ENCODE measurements at regions of chr1 and their contacts with region 1.

Region 1: GRCh38 chr1:203486618-203487370 is 7.2 kb upstream of the OPTC start:
- DNase-seq: no peak
- H3K4me3 ChIP-seq: peak overlapping the region; percentile 25 to 60 (median 38); a peak in 6 of 8 replicates
- H3K27ac ChIP-seq: peak overlapping the region; percentile 34; the same call in 1 of the 2 replicates
- H3K4me1 ChIP-seq: peaks cover 0 to 11% (median 5%) of the 10 kb centered on the region in 4 experiments; a peak in 6 of 7 replicates
- H3K27me3 ChIP-seq: no peaks in the 10 kb centered on the region
- CTCF ChIP-seq: no peak
- EP300 ChIP-seq: no peak
- POLR2A ChIP-seq: no peak
- RAD21 ChIP-seq: no peak

Region 2: DNA sequence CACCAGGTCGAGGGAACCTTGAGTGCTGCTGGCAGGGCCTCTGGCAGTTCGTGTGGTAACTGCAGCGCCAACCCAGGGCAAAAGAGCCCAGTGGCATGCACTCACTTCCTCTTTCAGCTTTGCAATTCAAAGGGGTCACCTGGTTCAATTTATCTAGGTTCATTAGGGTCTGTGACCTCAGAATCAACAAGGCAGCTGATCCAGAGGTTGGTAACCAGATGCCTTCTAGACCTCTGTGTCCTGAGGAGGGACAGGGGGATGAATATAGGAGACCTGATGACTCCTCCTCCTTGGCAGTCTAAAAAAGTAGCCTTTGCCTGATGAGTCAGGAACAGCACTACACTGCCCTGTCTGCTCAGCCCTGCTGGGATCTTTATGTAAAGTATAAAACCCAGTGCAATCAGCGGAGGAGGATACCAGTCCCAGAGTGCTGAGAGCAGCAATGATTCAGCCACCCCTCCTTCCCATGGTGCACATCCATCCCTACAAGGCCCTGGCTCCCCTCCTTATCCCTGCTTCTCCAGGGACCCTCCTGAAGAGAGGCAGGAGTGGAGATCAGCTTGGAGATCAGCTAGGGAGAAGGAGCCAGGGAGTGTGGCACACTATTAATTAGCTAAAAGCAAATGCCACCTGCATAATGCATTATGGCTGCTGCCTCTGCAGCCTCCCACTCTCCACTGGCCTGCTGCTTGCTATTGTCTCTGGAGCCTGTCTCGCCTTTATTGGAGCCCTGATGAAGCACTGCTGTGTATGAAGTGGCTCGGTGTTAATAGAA is 124.7 kb before region 1 on chr1:
- CTCF ChIA-PET with region 1: interaction called, 330 read pairs
- POLR2A ChIA-PET with region 1: no interaction called
- DNase-seq: no peak
- H3K4me3 ChIP-seq: no peak overlapping the region
- H3K27ac ChIP-seq: no peak overlapping the region
- H3K4me1 ChIP-seq: peaks cover 0 to 2% (median 0%) of the 10 kb centered on the region in 4 experiments; a peak in 2 of 7 replicates
- H3K27me3 ChIP-seq: peaks cover 0 to 2% (median 0%) of the 10 kb centered on the region in 4 experiments; a peak in 3 of 7 replicates
- CTCF ChIP-seq: no peak
- EP300 ChIP-seq: no peak
- POLR2A ChIP-seq: no peak
- RAD21 ChIP-seq: no peak

Region 3: DNA sequence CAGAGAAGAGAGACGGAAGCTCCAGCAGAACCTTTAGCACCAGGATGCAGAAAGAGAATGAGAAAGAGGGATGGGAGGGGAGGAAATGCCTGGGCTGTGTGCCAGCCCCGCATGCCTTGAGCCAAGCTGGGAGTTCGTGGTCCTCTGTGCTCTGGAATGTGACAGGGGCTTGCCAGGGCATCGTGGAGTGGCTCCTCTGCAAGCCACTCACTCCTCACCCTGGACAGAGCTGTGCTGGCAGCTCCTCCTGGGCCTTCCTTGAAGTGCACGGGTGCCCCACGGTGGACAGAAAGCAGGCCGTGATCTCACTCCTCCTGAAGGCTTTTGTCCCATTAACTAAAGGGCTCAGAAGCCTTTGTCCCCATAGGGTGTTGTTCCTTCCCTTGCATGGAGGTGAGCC is 46.0 kb before region 1 on chr1:
- CTCF ChIA-PET with region 1: interaction called, 10 read pairs
- POLR2A ChIA-PET with region 1: interaction called, 3 read pairs
- DNase-seq: no peak
- H3K4me3 ChIP-seq: no peak overlapping the region
- H3K27ac ChIP-seq: no peak overlapping the region
- H3K4me1 ChIP-seq: peaks cover 2 to 9% (median 5%) of the 10 kb centered on the region in 4 experiments
- H3K27me3 ChIP-seq: no peaks in the 10 kb centered on the region; a peak in 1 of 7 replicates
- CTCF ChIP-seq: peak; percentile 22 to 56 (median 53)
- EP300 ChIP-seq: no peak
- POLR2A ChIP-seq: no peak
- RAD21 ChIP-seq: peak; percentile 60 to 68

Region 4: DNA sequence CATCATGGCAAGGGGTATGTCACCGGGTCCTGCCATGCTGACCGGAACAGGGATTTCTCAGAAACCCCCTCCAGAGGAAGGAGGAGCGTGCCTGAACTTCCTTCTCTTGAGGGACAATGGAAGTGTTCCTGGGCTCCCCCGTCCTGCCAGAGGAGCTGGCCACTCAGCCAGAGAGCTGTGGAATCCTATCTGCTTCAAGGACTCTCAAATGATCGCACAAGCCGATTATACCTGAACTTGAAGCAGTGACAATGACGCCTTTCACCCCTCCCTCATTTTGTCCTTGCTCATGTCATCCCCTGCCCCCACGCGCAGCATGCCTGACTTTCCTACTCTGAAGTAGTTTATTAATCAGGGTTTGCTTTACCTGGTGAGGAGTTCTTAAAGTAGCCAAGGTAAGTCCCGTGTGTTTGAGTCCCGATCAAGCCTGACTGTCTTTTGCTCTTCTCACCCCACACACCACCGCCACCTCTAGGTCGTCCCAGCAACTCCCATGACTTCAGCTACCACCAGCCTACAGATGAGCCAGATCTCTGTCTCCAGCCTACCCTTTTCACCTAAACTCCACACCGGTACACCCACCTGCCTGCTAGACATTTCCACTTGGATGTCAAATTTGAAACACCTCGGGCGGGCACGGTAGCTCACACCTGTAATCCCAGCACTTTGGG is 36.2 kb before region 1 on chr1:
- CTCF ChIA-PET with region 1: interaction called, 19 read pairs
- POLR2A ChIA-PET with region 1: no interaction called
- DNase-seq: no peak
- H3K4me3 ChIP-seq: no peak overlapping the region
- H3K27ac ChIP-seq: no peak overlapping the region
- H3K4me1 ChIP-seq: peaks cover 0 to 2% (median 0%) of the 10 kb centered on the region in 4 experiments; a peak in 2 of 7 replicates
- H3K27me3 ChIP-seq: no peaks in the 10 kb centered on the region
- CTCF ChIP-seq: peak; percentile 57 to 70 (median 63)
- EP300 ChIP-seq: no peak
- POLR2A ChIP-seq: no peak
- RAD21 ChIP-seq: peak; percentile 56 to 65

Region 5: GRCh38 chr1:203475012-203475981 is 11.5 kb before region 1 on chr1 and contains the start of gene PRELP:
- CTCF ChIA-PET with region 1: interaction called, 51 read pairs
- POLR2A ChIA-PET with region 1: interaction called, 8 read pairs
- DNase-seq: no peak
- H3K4me3 ChIP-seq: peak within 1 kb of the TSS in 2 of 4 experiments; percentile 2 to 36; a peak in 2 of 8 replicates
- H3K27ac ChIP-seq: no peak within 1 kb of the TSS
- H3K4me1 ChIP-seq: peaks cover 2 to 16% (median 8%) of the 10 kb centered on the region in 4 experiments; a peak in 6 of 7 replicates
- H3K27me3 ChIP-seq: no peaks in the 10 kb centered on the region; a peak in 1 of 7 replicates
- CTCF ChIP-seq: peak; percentile 8 to 16 (median 15); a peak in 2 of 4 replicates
- EP300 ChIP-seq: no peak
- POLR2A ChIP-seq: no peak
- RAD21 ChIP-seq: peak; percentile 29 to 38; a peak in 2 of 4 replicates
- total RNA-seq, gene PRELP: 0.13 and 0.19 TPM in 2 replicates

Region 6: GRCh38 chr1:203526572-203526971 is 39.8 kb after region 1 on chr1:
- CTCF ChIA-PET with region 1: interaction called, 11 read pairs
- POLR2A ChIA-PET with region 1: no interaction called
- DNase-seq: no peak
- H3K4me3 ChIP-seq: no peak overlapping the region
- H3K27ac ChIP-seq: no peak overlapping the region
- H3K4me1 ChIP-seq: peaks cover 7 to 21% (median 18%) of the 10 kb centered on the region in 4 experiments
- H3K27me3 ChIP-seq: peaks cover 0 to 5% (median 4%) of the 10 kb centered on the region in 4 experiments; a peak in 3 of 7 replicates
- CTCF ChIP-seq: no peak
- EP300 ChIP-seq: no peak
- POLR2A ChIP-seq: no peak
- RAD21 ChIP-seq: no peak

Region 7: GRCh38 chr1:203625628-203626019 is 138.8 kb after region 1 on chr1:
- CTCF ChIA-PET with region 1: interaction called, 10 read pairs
- POLR2A ChIA-PET with region 1: no interaction called
- DNase-seq: no peak
- H3K4me3 ChIP-seq: no peak overlapping the region
- H3K27ac ChIP-seq: no peak overlapping the region
- H3K4me1 ChIP-seq: peaks cover 8 to 25% (median 17%) of the 10 kb centered on the region in 4 experiments
- H3K27me3 ChIP-seq: peaks cover 3 to 23% (median 9%) of the 10 kb centered on the region in 4 experiments
- CTCF ChIP-seq: no peak
- EP300 ChIP-seq: no peak
- POLR2A ChIP-seq: no peak
- RAD21 ChIP-seq: peak; percentile 25 to 27; a peak in 3 of 4 replicates